ENCODE measurements at regions of chr3 and their contacts with region 1.

Region 1: DNA sequence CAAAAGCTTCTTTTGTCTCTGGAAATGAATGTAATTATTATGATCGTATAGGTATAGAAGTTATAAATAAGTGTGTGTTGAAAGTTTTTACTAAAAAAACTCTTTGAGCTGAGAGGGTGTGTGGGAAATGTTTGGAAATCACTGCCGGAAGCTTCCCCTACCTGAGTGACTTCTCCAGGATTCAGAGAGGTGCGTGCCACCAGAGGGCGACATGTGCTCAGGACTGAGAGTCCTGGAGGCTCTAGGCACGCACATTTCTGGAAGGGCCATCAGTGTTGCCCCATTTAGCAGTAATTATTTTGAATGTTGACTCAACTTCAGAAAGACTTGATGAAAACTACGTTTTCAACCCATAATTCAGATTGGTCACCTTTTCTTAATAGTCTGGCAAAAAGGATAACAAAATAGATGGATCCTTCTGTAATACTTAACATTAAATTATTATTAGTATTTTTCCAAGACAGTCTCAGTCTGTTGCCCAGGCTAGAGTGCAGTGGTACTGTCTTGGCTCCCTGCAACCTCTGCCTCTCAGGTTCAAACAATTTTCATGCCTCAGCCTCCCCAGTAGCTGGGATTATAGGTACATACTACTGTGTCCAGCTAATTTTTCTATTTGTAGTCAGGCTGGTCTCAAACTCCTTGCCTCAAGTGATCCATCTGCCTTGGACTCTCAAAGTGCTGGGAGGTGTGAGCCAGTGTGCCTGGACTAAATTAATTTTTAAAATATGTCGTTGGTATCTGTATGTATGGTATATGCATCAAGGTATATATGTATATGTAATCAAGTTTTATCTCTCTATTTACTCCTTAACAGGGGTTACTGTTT is 34.5 kb downstream of the GPR171 start:
- DNase-seq: no peak
- H3K4me3 ChIP-seq: no peak overlapping the region
- H3K27me3 ChIP-seq: no peaks in the 10 kb centered on the region
- CTCF ChIP-seq: peak; percentile 85

Region 2: DNA sequence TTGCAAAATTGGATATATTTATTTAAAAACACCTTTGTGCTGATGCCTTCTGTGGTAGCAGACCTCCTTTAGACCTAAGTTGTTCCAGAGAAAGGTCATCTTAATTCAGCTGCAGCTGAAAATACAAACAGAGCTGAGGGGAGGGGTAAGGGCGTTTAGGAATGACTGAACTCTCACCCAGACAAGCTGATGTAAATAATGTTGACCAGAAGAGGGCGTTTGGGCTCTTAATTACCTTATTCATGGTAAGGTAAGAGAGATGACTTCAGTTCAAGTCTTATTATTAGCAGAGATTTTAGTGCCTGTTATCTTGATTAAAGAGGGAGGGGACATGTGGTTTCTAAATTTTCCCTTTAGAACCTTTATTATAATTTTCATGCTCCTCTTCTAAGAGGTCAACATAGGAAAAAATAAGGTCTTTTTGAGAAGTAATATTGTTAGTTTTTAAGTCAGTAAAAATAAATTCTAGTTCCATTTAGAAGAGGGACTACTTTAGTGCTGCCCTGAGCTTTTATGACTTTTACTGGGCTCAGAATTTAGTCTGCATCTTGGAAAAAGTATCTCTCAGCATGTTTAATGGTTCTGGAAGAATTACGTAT is 11.8 kb before region 1 on chr3:
- CTCF ChIA-PET with region 1: interaction called, 12 read pairs
- POLR2A ChIA-PET with region 1: no interaction called
- DNase-seq: no peak
- H3K4me3 ChIP-seq: no peak overlapping the region
- H3K27me3 ChIP-seq: no peaks in the 10 kb centered on the region
- CTCF ChIP-seq: peak; percentile 61

Region 3: DNA sequence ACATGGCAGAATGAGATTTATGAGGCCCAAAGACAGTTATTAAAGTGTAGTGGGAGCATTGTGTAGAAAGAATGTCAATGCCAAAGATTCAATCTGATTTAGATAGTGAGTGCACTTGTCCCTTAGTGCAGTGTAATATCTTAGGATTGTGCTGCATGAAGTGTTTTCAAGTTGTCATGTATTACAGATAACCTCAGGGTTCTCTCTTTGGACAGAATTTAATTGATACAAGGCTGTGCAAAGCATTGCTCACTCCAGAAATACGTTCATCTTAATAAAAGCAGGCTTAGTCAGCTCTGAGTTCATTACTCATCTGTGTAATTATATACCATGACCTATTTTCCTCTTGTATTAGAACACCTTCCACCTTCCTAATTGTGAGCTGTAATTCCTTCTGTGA is 50.6 kb after region 1 on chr3:
- CTCF ChIA-PET with region 1: interaction called, 12 read pairs
- POLR2A ChIA-PET with region 1: no interaction called
- DNase-seq: peak; percentile 75
- H3K4me3 ChIP-seq: no peak overlapping the region
- H3K27me3 ChIP-seq: no peaks in the 10 kb centered on the region
- CTCF ChIP-seq: no peak

Region 4: GRCh38 chr3:151460228-151460627 is 291.7 kb after region 1 on chr3:
- CTCF ChIA-PET with region 1: no interaction called
- POLR2A ChIA-PET with region 1: no interaction called
- DNase-seq: no peak
- H3K4me3 ChIP-seq: no peak overlapping the region
- H3K27me3 ChIP-seq: peaks cover 14% of the 10 kb centered on the region
- CTCF ChIP-seq: no peak